Endothelial cell of umbilical vein (primary cell): ENCODE measurements at regions of chr11 and their contacts with region 1.

Region 1: GRCh38 chr11:75577207-75577606 is 15.2 kb downstream of the SERPINH1 start:
- DNase-seq: no peak
- H3K4me3 ChIP-seq: no peak overlapping the region
- H3K27ac ChIP-seq: no peak overlapping the region
- H3K4me1 ChIP-seq: peaks cover 5% of the 10 kb centered on the region
- H3K27me3 ChIP-seq: no peaks in the 10 kb centered on the region
- CTCF ChIP-seq: peak; percentile 41 to 62
- POLR2A ChIP-seq: no peak

Region 2: GRCh38 chr11:75547580-75548058 is 29.6 kb before region 1 on chr11:
- CTCF ChIA-PET with region 1: interaction called, 37 read pairs
- POLR2A ChIA-PET with region 1: interaction called, 3 read pairs
- dilution Hi-C with region 1: no loop called
- intact Hi-C with region 1: loop called (anchors 1 kb)
- DNase-seq: peak; percentile 77
- H3K4me3 ChIP-seq: no peak overlapping the region
- H3K27ac ChIP-seq: no peak overlapping the region
- H3K4me1 ChIP-seq: no peaks in the 10 kb centered on the region
- H3K27me3 ChIP-seq: peaks cover 0 to 2% of the 10 kb centered on the region in 2 experiments
- CTCF ChIP-seq: peak; percentile 81 to 82
- POLR2A ChIP-seq: peak; percentile 7

Region 3: DNA sequence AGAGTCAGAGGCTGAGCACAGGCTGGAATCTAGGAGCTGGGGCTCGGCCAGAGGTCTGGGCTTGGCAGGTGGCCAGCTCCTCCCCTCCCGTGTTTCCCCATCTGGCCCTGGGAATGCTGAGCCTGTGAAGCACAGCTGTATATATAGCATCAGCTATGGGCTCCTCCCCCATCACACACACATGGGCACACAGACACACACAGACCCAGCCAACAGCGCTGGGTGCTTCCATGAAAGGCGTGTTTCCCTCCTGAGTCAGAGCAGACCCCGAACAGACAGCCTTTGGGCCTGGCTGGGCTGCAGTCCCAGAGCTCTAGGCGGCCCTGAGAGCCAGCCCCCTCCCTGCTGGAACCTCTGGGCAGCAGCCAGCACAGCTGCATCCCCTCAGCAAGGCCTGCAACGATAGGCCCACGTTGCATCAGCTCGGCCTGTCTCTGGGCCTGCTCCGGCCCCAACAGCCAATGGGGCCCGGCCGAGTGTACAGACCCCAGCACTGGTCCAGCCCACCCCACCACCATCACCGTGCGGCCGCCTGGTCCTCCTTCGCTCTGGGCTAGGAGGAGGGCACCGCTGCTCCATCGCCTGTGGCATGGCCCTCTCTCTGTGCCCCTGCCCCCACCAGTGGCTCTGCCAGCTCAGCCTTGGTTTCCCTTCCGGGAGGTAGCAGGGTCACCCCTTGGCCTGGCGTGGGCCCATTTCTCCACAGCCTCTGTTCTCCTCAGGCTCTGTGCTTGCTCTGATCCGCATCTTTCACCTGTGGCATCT is 22.8 kb before region 1 on chr11:
- CTCF ChIA-PET with region 1: interaction called, 107 read pairs
- POLR2A ChIA-PET with region 1: interaction called, 6 read pairs
- dilution Hi-C with region 1: no loop called
- intact Hi-C with region 1: no loop called
- DNase-seq: peak; percentile 99
- H3K4me3 ChIP-seq: no peak overlapping the region
- H3K27ac ChIP-seq: peak overlapping the region; percentile 37
- H3K4me1 ChIP-seq: peaks cover 29% of the 10 kb centered on the region
- H3K27me3 ChIP-seq: no peaks in the 10 kb centered on the region
- CTCF ChIP-seq: no peak
- POLR2A ChIP-seq: peak; percentile 38

Region 4: GRCh38 chr11:75562048-75562835 is 15.0 kb before region 1 on chr11 and contains the start of gene SERPINH1:
- CTCF ChIA-PET with region 1: interaction called, 107 read pairs
- POLR2A ChIA-PET with region 1: interaction called, 9 read pairs
- dilution Hi-C with region 1: no loop called
- intact Hi-C with region 1: loop called (anchors 1 kb)
- DNase-seq: peak; percentile 71
- H3K4me3 ChIP-seq: peak within 1 kb of the TSS; percentile 50 to 84 (median 66)
- H3K27ac ChIP-seq: peak within 1 kb of the TSS; percentile 92
- H3K4me1 ChIP-seq: peaks cover 54% of the 10 kb centered on the region
- H3K27me3 ChIP-seq: no peaks in the 10 kb centered on the region
- CTCF ChIP-seq: no peak
- POLR2A ChIP-seq: peak; percentile 86
- total RNA-seq, gene SERPINH1: 384 and 409 TPM in 2 replicates

Region 5: GRCh38 chr11:75850787-75851186 is 273.6 kb after region 1 on chr11:
- CTCF ChIA-PET with region 1: no interaction called
- POLR2A ChIA-PET with region 1: no interaction called
- dilution Hi-C with region 1: no loop called
- intact Hi-C with region 1: no loop called
- DNase-seq: peak; percentile 23
- H3K4me3 ChIP-seq: no peak overlapping the region
- H3K27ac ChIP-seq: peak overlapping the region; percentile 20
- H3K4me1 ChIP-seq: peaks cover 22% of the 10 kb centered on the region
- H3K27me3 ChIP-seq: no peaks in the 10 kb centered on the region
- CTCF ChIP-seq: no peak
- POLR2A ChIP-seq: no peak